Sigmoid colon (tissue), 7 donors: ENCODE measurements at regions of chr6 and their contacts with region 1.

Region 1: GRCh38 chr6:166005944-166006899 is 161.4 kb downstream of the TBXT start:
- DNase-seq: peak; percentile 88
- H3K4me3 ChIP-seq: peak overlapping the region; percentile 29 to 53 (median 46)
- H3K27ac ChIP-seq: peak overlapping the region; percentile 73 to 93 (median 80)
- H3K4me1 ChIP-seq: peaks cover 0 to 58% (median 50%) of the 10 kb centered on the region in 4 donors
- H3K27me3 ChIP-seq: peaks cover 0 to 46% (median 12%) of the 10 kb centered on the region in 3 donors
- CTCF ChIP-seq: no peak
- EP300 ChIP-seq: peak; percentile 89 to 98 (median 93)
- POLR2A ChIP-seq: no peak

Region 2: GRCh38 chr6:165876588-165876987 is 129.6 kb before region 1 on chr6:
- intact Hi-C with region 1: loop called (anchors 1 kb)
- DNase-seq: peak; percentile 95
- H3K4me3 ChIP-seq: peak overlapping the region in 3 of 4 donors; percentile 2 to 6 (median 3)
- H3K27ac ChIP-seq: peak overlapping the region; percentile 72 to 84 (median 78)
- H3K4me1 ChIP-seq: peaks cover 0 to 49% (median 32%) of the 10 kb centered on the region in 4 donors
- H3K27me3 ChIP-seq: no peaks in the 10 kb centered on the region
- CTCF ChIP-seq: no peak
- EP300 ChIP-seq: peak; percentile 76 to 98 (median 94)
- POLR2A ChIP-seq: no peak

Region 3: GRCh38 chr6:165884813-165885765 is 121.1 kb before region 1 on chr6:
- intact Hi-C with region 1: loop called (anchors 2 kb)
- DNase-seq: peak; percentile 92
- H3K4me3 ChIP-seq: no peak overlapping the region
- H3K27ac ChIP-seq: peak overlapping the region in 1 of 4 donors; percentile 51
- H3K4me1 ChIP-seq: peaks cover 0 to 24% (median 9%) of the 10 kb centered on the region in 4 donors
- H3K27me3 ChIP-seq: no peaks in the 10 kb centered on the region
- CTCF ChIP-seq: peak; percentile 79 to 95 (median 90)
- EP300 ChIP-seq: no peak
- POLR2A ChIP-seq: no peak

Region 4: GRCh38 chr6:165961233-165961632 is 45.0 kb before region 1 on chr6:
- intact Hi-C with region 1: no loop called
- DNase-seq: no peak
- H3K4me3 ChIP-seq: no peak overlapping the region
- H3K27ac ChIP-seq: no peak overlapping the region
- H3K4me1 ChIP-seq: no peaks in the 10 kb centered on the region
- H3K27me3 ChIP-seq: no peaks in the 10 kb centered on the region
- CTCF ChIP-seq: no peak
- EP300 ChIP-seq: no peak
- POLR2A ChIP-seq: no peak

Region 5: GRCh38 chr6:165987483-165988301 is 18.5 kb before region 1 on chr6:
- intact Hi-C with region 1: loop called (anchors 1 kb)
- DNase-seq: peak; percentile 98
- H3K4me3 ChIP-seq: peak overlapping the region; percentile 50 to 66 (median 55)
- H3K27ac ChIP-seq: peak overlapping the region; percentile 24 to 87 (median 78)
- H3K4me1 ChIP-seq: peaks cover 0 to 28% (median 23%) of the 10 kb centered on the region in 4 donors
- H3K27me3 ChIP-seq: peaks cover 0 to 19% (median 0%) of the 10 kb centered on the region in 3 donors
- CTCF ChIP-seq: no peak
- EP300 ChIP-seq: peak; percentile 95 to 99 (median 98)
- POLR2A ChIP-seq: no peak

Region 6: DNA sequence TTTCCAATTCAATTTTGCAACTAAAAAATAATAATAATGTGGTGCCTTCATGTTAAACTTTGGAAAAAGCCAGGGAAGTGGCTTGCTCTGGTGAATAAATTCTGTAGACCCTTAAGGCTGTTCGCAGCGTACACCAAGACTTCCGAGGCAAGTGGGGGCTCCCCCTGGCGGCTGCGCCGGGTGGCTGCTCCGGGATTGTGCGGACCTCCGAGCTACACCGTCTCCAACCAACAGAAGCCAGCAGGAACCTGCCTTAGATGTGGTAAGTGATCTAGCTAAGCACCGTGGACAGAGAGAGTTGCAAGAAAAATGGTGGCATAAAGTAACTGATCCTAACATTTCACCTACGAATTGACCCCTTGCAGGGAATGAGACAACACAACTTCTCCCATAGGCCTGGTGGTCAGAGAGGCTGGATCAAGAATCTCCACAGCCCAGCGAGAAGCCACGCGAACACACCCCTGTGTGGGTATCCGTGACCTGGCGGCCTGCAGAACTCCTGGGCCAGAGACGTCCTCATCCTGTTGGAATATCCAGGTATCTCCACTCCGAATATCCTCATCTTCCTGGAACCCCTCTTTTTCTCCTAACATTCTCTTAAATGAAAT is 91.8 kb after region 1 on chr6:
- intact Hi-C with region 1: loop called (anchors 2 kb)
- DNase-seq: peak; percentile 88
- H3K4me3 ChIP-seq: peak overlapping the region in 3 of 4 donors; percentile 39 to 47 (median 45)
- H3K27ac ChIP-seq: peak overlapping the region in 3 of 4 donors; percentile 35 to 65 (median 39)
- H3K4me1 ChIP-seq: no peaks in the 10 kb centered on the region
- H3K27me3 ChIP-seq: no peaks in the 10 kb centered on the region
- CTCF ChIP-seq: peak; percentile 76 to 92 (median 81)
- EP300 ChIP-seq: no peak
- POLR2A ChIP-seq: no peak